T-cell (primary cell): ENCODE measurements at regions of chr12 and their contacts with region 1.

Region 1: DNA sequence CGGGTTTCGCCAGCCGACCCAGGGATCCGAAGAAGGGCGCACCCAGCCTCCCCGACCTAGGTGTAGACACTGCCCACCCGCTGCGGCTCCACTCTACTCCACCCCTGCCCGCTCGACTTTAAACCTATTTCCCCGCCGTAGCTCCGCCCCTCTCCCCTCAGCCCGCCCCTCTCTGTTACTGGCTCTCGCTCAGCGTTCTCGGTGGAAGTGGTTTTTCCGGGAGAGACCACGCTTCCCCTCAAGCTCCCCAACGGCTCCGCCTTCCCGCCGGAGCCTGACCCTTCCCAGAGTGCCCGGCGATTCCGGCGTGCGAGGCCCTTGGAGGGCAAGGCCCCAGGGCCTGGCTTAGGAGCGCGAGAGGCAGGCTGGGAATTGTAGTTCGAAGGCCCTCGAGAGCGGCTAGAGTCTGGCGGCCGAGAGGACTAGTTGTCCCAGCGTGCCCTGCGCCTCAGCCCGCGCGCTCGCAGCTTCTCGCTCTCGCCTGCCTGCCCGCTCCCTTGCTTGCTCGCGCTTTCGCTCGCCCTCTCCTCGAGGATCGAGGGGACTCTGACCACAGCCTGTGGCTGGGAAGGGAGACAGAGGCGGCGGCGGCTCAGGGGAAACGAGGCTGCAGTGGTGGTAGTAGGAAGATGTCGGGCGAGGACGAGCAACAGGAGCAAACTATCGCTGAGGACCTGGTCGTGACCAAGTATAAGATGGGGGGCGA is at the start of gene PA2G4:
- DNase-seq: peak; percentile 85 to 96 (median 91)
- ATAC-seq: peak; percentile 87 to 93 (median 90)
- H3K4me3 ChIP-seq: peak within 1 kb of the TSS; percentile 73 to 92
- H3K4me3 Mint-ChIP-seq: peak within 1 kb of the TSS; percentile 94 to 98 (median 96)
- H3K27ac ChIP-seq: peak within 1 kb of the TSS; percentile 72
- H3K27ac Mint-ChIP-seq: peak within 1 kb of the TSS; percentile 99 to 100
- H3K4me1 ChIP-seq: peaks cover 35 to 49% of the 10 kb centered on the region in 2 experiments
- H3K4me1 Mint-ChIP-seq: peaks cover 55 to 66% (median 63%) of the 10 kb centered on the region in 3 donors
- H3K27me3 ChIP-seq: no peaks in the 10 kb centered on the region
- H3K27me3 Mint-ChIP-seq: no peaks in the 10 kb centered on the region
- total RNA-seq, gene PA2G4: 67.5 to 113 (median 104) TPM

Region 2: DNA sequence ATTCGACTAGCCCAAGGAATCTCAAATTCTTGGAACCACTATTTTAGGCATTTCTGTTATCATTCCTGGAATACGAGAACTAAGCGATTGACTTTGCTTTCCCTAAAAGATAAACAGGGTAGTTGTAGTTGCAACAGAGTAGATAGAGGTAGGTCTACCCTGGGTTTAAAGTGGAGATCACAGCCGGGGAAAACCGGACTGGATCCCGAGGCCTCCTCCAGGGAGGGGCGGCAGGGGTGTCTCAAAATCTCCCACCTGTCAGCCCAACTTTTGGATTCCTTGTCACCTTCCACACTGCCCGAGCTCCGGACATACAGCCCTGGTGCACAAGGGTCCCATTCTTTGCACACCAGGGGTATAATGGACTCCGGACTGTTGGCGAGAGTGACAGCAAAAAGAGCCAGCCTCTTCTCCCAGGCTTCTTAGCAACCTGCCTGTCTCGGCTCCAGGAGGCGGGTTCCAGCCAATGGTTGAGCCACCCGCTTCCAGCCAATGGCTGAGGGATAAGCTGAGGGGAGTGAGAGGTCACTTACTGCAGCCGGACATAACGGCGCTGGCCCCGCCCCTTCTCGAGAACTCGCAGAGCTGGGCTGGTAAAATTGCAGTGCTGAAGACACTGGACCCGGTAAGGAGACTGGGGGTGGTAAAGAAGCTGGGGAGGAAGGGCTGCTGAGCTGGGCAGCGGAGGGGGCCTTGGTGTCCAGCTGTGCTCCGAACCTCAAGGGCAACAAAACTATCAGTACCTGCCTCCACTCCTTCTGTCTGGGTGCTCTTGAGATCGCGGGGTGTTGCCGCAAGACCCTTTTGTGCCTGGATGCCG is 107.3 kb before region 1 on chr12 and contains the start of gene SUOX:
- CTCF ChIA-PET with region 1: interaction called in 1 of 2 experiments, 10 read pairs
- POLR2A ChIA-PET with region 1: interaction called in 1 of 2 experiments, 8 read pairs
- DNase-seq: peak in 16 of 35 experiments; percentile 7 to 63 (median 26)
- ATAC-seq: peak; percentile 25 to 60 (median 36)
- H3K4me3 ChIP-seq: peak within 1 kb of the TSS in 1 of 2 donors; percentile 49
- H3K4me3 Mint-ChIP-seq: peak within 1 kb of the TSS; percentile 46 to 66 (median 56)
- H3K27ac ChIP-seq: no peak within 1 kb of the TSS
- H3K27ac Mint-ChIP-seq: peak within 1 kb of the TSS; percentile 23 to 34
- H3K4me1 ChIP-seq: peaks cover 0 to 16% of the 10 kb centered on the region in 2 experiments
- H3K4me1 Mint-ChIP-seq: peaks cover 21 to 24% (median 22%) of the 10 kb centered on the region in 3 donors
- H3K27me3 ChIP-seq: peaks cover 0 to 22% of the 10 kb centered on the region in 2 experiments
- H3K27me3 Mint-ChIP-seq: peaks cover 0 to 9% of the 10 kb centered on the region in 2 donors
- total RNA-seq, gene SUOX: 2.6 to 7.3 (median 3.2) TPM

Region 3: DNA sequence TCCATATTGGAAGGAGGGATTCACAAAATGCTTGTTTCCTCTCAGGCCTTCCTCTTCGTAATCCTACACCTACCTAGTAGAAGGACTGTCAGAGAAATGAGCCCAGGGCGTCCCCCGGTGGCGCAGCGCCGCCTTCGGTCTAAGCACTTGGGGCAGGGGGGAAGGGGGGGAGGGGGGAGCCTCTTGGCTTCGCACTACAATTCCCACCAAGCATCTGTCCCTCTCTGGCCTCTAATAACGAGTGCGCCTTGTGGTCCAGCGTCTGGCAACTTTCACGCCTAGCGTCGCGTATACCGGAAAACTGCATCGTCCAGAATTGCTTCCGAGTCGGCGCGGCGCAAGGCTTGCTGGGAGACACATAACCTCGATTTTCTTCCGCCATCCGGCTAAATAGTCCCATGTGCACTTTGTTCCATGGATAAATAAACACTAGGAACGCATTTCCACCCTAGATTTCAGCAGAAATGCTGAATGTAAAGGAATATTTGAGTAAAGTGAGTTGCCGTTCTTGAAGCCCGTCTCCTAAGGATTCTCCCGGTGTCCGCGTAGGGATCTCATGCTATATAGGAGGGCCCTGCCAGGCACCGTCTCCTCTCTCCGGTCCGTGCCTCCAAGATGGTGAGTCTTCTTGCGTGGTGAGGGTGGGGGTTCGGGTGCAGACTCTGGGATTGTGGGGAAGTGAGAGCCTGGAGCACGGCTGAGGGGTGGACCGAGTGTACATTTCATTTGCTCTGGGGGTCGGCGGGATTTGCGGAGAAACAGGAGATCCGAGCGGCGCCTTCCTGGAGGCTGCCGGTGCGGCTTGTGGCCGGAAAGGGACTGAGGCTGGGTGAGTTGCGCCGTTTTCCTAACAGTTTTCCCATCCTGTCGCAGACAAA is 62.5 kb before region 1 on chr12 and contains the start of gene RPS26:
- CTCF ChIA-PET with region 1: interaction called in 1 of 2 experiments, 10 read pairs
- POLR2A ChIA-PET with region 1: interaction called in 1 of 2 experiments, 3 read pairs
- DNase-seq: peak; percentile 80 to 98 (median 92)
- ATAC-seq: peak; percentile 90 to 94 (median 92)
- H3K4me3 ChIP-seq: peak within 1 kb of the TSS; percentile 74 to 89
- H3K4me3 Mint-ChIP-seq: peak within 1 kb of the TSS; percentile 91 to 99 (median 99)
- H3K27ac ChIP-seq: peak within 1 kb of the TSS; percentile 71
- H3K27ac Mint-ChIP-seq: peak within 1 kb of the TSS; percentile 98 to 99
- H3K4me1 ChIP-seq: peaks cover 23 to 33% of the 10 kb centered on the region in 2 experiments
- H3K4me1 Mint-ChIP-seq: peaks cover 32 to 52% (median 40%) of the 10 kb centered on the region in 3 donors
- H3K27me3 ChIP-seq: no peaks in the 10 kb centered on the region
- H3K27me3 Mint-ChIP-seq: no peaks in the 10 kb centered on the region
- total RNA-seq, gene RPS26: 30.3 to 141 (median 49.9) TPM

Region 4: GRCh38 chr12:56053407-56053893 is 50.8 kb before region 1 on chr12:
- CTCF ChIA-PET with region 1: interaction called, 4 to 11 read pairs
- POLR2A ChIA-PET with region 1: no interaction called
- DNase-seq: no peak
- ATAC-seq: no peak
- H3K4me3 ChIP-seq: no peak overlapping the region
- H3K4me3 Mint-ChIP-seq: no peak overlapping the region
- H3K27ac ChIP-seq: no peak overlapping the region
- H3K27ac Mint-ChIP-seq: no peak overlapping the region
- H3K4me1 ChIP-seq: no peaks in the 10 kb centered on the region
- H3K4me1 Mint-ChIP-seq: peaks cover 0 to 7% (median 4%) of the 10 kb centered on the region in 3 donors
- H3K27me3 ChIP-seq: peaks cover 0 to 2% of the 10 kb centered on the region in 2 experiments
- H3K27me3 Mint-ChIP-seq: no peaks in the 10 kb centered on the region

Region 5: GRCh38 chr12:56221527-56222387 is 117.5 kb after region 1 on chr12 and contains the start of gene RNF41:
- CTCF ChIA-PET with region 1: interaction called in 1 of 2 experiments, 11 read pairs
- POLR2A ChIA-PET with region 1: interaction called in 1 of 2 experiments, 5 read pairs
- DNase-seq: peak; percentile 80 to 96 (median 89)
- ATAC-seq: peak; percentile 81 to 85 (median 82)
- H3K4me3 ChIP-seq: peak within 1 kb of the TSS; percentile 98
- H3K4me3 Mint-ChIP-seq: peak within 1 kb of the TSS; percentile 98 to 100 (median 98)
- H3K27ac ChIP-seq: peak within 1 kb of the TSS; percentile 94
- H3K27ac Mint-ChIP-seq: peak within 1 kb of the TSS; percentile 98 to 99
- H3K4me1 ChIP-seq: peaks cover 18 to 54% of the 10 kb centered on the region in 2 experiments
- H3K4me1 Mint-ChIP-seq: peaks cover 47 to 52% (median 49%) of the 10 kb centered on the region in 3 donors
- H3K27me3 ChIP-seq: no peaks in the 10 kb centered on the region
- H3K27me3 Mint-ChIP-seq: no peaks in the 10 kb centered on the region
- total RNA-seq, gene RNF41: 26.3 to 43.1 (median 39.4) TPM

Region 6: DNA sequence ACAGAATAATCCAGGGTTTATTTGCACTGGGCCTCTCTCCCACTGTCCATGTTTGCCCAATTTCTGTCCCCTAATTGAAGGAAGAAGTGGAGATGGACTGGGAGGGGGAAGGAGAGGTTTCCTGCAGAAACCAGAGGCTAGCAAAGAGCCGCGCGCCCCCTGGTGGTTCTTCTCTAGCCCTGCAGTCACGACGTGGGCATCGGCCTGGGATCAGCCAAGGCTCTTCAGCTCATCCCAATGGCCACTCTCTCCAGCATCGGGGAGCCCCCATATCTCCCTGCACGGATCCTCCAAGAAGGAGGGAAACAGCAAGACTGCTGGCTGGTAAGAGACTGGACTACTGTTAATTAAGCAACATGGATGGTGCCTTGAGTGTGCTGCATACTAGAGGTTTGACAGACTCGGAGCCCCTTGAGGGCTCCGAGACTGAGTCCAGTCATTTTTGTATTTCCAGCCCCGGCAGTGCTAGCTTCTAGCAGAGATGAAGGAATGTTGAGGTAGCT is 883.3 kb after region 1 on chr12:
- CTCF ChIA-PET with region 1: no interaction called
- POLR2A ChIA-PET with region 1: no interaction called
- DNase-seq: peak in 34 of 35 experiments; percentile 41 to 83 (median 66)
- ATAC-seq: peak; percentile 78 to 80 (median 80)
- H3K4me3 ChIP-seq: no peak overlapping the region
- H3K4me3 Mint-ChIP-seq: peak overlapping the region in 1 of 3 donors; percentile 46
- H3K27ac ChIP-seq: no peak overlapping the region
- H3K27ac Mint-ChIP-seq: no peak overlapping the region
- H3K4me1 ChIP-seq: peaks cover 0 to 14% of the 10 kb centered on the region in 2 experiments
- H3K4me1 Mint-ChIP-seq: peaks cover 9 to 15% (median 15%) of the 10 kb centered on the region in 3 donors
- H3K27me3 ChIP-seq: no peaks in the 10 kb centered on the region
- H3K27me3 Mint-ChIP-seq: no peaks in the 10 kb centered on the region